ENCODE measurements at regions of chr3 and their contacts with region 1.

Region 1: DNA sequence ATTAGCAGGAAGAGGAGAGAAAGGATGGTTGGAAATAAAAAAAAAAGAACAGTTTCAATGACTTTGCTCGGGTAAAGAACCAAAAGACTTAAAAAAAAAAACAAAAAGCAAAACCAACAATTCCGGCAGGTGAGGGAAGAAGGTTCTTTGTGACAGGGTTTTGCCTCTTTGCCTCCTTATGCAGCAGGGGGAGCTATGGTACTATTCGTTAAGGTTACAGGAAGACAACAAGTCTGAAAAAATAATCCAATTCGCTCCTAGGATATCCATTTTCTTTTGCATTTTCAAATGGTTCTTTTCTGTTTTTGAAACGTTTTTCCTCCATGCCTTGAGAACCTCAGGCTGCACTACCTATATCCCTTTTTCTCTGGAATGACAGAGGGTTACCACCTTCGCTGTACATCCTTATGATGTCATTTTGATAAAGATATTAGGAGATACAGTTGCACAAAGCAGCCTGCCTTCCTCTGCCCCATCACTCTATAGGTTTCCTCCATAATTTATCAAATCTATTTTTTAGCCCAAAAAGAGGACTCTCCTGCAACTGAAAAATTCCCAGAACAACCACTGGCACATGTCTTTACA is 55.0 kb downstream of the CFAP20DC start:
- DNase-seq: peak; percentile 57
- H3K4me3 Mint-ChIP-seq: no peak overlapping the region
- H3K27ac Mint-ChIP-seq: no peak overlapping the region
- H3K4me1 Mint-ChIP-seq: peaks cover 9% of the 10 kb centered on the region
- H3K27me3 Mint-ChIP-seq: no peaks in the 10 kb centered on the region

Region 2: GRCh38 chr3:58640700-58641372 is 354.0 kb before region 1 on chr3:
- CTCF ChIA-PET with region 1: no interaction called
- intact Hi-C with region 1: loop called (anchors 2 kb)
- DNase-seq: peak; percentile 76
- H3K4me3 Mint-ChIP-seq: no peak overlapping the region
- H3K27ac Mint-ChIP-seq: no peak overlapping the region
- H3K4me1 Mint-ChIP-seq: no peaks in the 10 kb centered on the region
- H3K27me3 Mint-ChIP-seq: peaks cover 2% of the 10 kb centered on the region

Region 3: DNA sequence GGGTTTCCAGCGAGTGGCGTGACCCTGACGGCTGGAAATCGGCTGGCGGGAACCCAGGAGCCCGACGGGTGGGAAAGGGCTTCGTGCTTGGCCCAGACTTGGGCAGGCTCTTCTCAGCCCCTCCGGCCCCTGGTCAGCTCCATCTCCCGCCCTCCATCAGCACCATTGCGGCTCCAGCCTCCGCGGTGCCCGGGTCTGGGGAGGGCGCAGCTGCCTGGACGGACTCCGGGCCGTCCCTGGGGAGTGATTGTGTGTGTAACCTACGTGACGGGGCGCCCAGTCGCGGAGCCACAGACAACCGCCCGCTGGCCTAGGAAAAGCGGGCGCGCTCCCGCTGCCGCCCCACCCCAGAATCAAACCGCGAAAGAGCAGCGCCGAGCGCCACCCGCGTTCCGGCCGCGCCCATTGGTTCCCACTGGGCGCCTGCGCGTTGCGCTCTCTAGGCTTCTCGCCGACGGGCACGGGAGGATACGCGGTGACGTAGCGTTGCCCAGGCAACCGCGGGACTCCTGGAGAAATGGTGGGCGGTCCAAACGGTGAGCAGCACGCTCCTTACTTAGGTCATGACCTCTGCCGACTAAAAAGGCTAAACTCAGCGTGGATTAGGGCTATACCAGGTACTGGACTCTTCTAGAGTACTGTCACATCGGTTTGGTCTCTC is 55.0 kb after region 1 on chr3 and contains the start of gene CFAP20DC:
- CTCF ChIA-PET with region 1: interaction called, 12 read pairs
- intact Hi-C with region 1: loop called (anchors 1 kb)
- DNase-seq: peak; percentile 95
- H3K4me3 Mint-ChIP-seq: peak within 1 kb of the TSS; percentile 68
- H3K27ac Mint-ChIP-seq: peak within 1 kb of the TSS; percentile 68
- H3K4me1 Mint-ChIP-seq: peaks cover 9% of the 10 kb centered on the region
- H3K27me3 Mint-ChIP-seq: no peaks in the 10 kb centered on the region
- total RNA-seq, gene CFAP20DC: 2.4 to 2.7 TPM

Region 4: GRCh38 chr3:59313365-59313764 is 318.5 kb after region 1 on chr3:
- CTCF ChIA-PET with region 1: no interaction called
- intact Hi-C with region 1: loop called (anchors 5 kb)
- DNase-seq: peak; percentile 74
- H3K4me3 Mint-ChIP-seq: no peak overlapping the region
- H3K27ac Mint-ChIP-seq: no peak overlapping the region
- H3K4me1 Mint-ChIP-seq: peaks cover 22% of the 10 kb centered on the region
- H3K27me3 Mint-ChIP-seq: no peaks in the 10 kb centered on the region

Region 5: DNA sequence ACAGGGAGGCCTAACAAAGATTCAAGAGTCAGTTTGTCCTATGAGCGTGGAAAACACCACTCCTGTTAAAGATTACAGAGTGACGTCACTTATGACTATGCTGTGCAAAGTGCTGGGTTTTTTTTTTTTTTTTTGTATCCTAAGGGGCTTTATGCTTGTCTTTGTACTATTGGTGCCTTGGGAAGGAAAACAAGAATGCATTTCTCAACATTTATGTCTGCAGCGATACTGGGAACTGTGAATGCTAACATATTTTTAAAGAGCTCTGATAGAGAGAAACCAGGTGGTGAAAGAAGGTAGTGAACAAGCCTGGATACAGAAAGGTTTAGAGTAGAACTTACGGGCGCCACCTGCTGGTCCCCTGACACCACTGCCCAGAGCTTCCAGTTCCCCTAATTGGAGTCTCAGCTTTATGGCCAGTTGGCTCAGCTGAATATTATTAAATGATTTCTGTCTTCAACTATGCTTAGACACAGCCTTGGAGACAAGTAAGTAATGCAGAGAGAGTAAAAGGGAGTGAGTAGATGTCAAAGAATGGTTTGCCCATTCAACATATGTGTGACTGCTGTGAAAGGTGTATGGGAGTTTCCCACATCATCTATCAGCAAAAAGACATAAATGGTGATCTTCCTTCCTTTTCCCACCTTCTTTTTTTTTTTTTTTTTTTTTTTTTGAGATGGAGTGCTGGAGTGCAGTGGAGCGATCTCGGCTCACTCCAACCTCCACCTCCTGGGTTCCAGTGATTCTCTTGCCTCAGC is 862.9 kb after region 1 on chr3:
- CTCF ChIA-PET with region 1: no interaction called
- intact Hi-C with region 1: loop called (anchors 10 kb)
- DNase-seq: peak; percentile 90
- H3K4me3 Mint-ChIP-seq: no peak overlapping the region
- H3K27ac Mint-ChIP-seq: peak overlapping the region; percentile 6
- H3K4me1 Mint-ChIP-seq: peaks cover 35% of the 10 kb centered on the region
- H3K27me3 Mint-ChIP-seq: no peaks in the 10 kb centered on the region